Caco-2 (cell line): ENCODE measurements at regions of chr11 and their contacts with region 1.

Region 1: DNA sequence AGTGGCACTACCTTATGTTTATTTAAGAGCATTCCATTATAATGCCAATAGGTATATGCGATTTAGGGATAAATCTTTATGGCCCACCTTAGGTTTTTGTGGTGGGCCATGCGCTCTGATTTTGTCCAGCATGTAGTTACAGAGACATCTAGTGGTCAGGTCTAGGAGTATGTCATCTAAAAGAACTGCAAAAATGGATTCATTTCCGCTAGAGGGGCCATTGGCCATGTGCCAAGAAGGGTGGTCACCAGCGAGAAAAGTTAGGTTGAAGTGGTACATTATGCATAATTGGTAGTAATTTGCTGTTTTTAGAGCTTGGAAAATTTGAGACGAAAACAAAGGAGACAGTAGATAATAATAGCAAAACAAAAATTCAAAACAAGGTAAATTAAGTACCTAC is 27.7 kb downstream of the LRRC4C start:
- DNase-seq: peak in 1 of 2 experiments; percentile 19
- H3K4me3 ChIP-seq: no peak overlapping the region
- H3K4me3 Mint-ChIP-seq: no peak overlapping the region
- H3K27ac Mint-ChIP-seq: no peak overlapping the region
- H3K4me1 ChIP-seq: peaks cover 1% of the 10 kb centered on the region; the same call in 1 of the 2 replicates
- H3K4me1 Mint-ChIP-seq: peaks cover 3% of the 10 kb centered on the region
- H3K27me3 ChIP-seq: no peaks in the 10 kb centered on the region
- H3K27me3 Mint-ChIP-seq: peaks cover 2% of the 10 kb centered on the region
- CTCF ChIP-seq: peak; percentile 62 to 82

Region 2: DNA sequence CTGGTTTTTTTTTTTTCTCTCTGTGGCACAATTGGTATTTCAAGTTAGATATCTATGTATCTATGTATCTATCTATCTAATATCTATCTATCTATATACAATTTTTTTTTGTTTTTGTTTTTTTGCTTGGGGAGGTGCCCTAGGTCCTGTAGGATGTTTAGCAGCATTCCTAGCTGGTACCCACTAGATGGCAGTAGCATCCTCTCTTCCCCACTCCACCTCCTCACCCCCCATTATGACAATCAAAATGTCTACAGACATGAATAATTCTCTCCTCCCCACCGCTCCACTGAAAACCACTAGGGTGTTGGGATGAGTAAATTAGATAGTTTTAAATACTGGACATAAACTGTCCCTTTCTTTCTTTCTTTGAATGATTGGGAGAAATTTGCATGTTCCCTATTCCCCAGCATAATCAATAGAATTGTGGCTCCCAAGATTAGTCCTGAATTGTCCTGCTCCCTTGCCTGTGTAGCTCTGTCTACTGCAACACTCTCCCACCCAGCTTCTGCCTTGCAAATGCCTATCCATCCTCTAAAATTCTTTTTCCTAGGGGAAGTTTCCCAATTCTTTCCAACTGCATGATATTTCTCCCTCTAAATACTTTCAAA is 1124.7 kb before region 1 on chr11:
- CTCF ChIA-PET with region 1: no interaction called
- POLR2A ChIA-PET with region 1: no interaction called
- intact Hi-C with region 1: loop called (anchors 5 kb)
- DNase-seq: peak in 1 of 2 experiments; percentile 24
- H3K4me3 ChIP-seq: no peak overlapping the region
- H3K4me3 Mint-ChIP-seq: no peak overlapping the region
- H3K27ac Mint-ChIP-seq: no peak overlapping the region
- H3K4me1 ChIP-seq: no peaks in the 10 kb centered on the region
- H3K4me1 Mint-ChIP-seq: no peaks in the 10 kb centered on the region
- H3K27me3 ChIP-seq: no peaks in the 10 kb centered on the region
- H3K27me3 Mint-ChIP-seq: peaks cover 4% of the 10 kb centered on the region
- CTCF ChIP-seq: peak; percentile 55 to 75

Region 3: DNA sequence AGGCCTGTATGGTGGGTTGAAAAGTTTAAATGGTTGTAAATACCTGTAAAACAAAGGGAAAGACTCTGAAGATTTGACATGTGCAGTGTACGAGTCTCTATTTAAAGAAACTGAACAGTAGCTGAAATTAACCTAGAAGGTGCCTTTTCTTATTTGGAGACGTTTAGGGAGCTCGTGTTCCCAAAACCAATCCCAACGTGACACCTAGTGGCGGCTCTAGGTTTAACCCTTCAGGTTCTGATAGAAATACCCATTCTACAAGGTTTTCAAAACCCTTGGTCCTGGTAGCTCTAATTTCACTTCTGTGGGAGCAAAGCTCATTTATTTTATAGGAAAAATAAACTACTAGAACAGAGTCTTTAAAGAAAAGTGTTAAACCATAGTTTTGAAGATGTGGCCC is 230.6 kb before region 1 on chr11:
- CTCF ChIA-PET with region 1: no interaction called
- POLR2A ChIA-PET with region 1: no interaction called
- intact Hi-C with region 1: loop called (anchors 1 kb)
- DNase-seq: peak; percentile 47 to 65
- H3K4me3 ChIP-seq: no peak overlapping the region
- H3K4me3 Mint-ChIP-seq: no peak overlapping the region
- H3K27ac Mint-ChIP-seq: no peak overlapping the region
- H3K4me1 ChIP-seq: no peaks in the 10 kb centered on the region
- H3K4me1 Mint-ChIP-seq: no peaks in the 10 kb centered on the region
- H3K27me3 ChIP-seq: no peaks in the 10 kb centered on the region
- H3K27me3 Mint-ChIP-seq: peaks cover 3% of the 10 kb centered on the region
- CTCF ChIP-seq: peak; percentile 73 to 75

Region 4: GRCh38 chr11:41289408-41289807 is 142.4 kb before region 1 on chr11:
- CTCF ChIA-PET with region 1: no interaction called
- POLR2A ChIA-PET with region 1: no interaction called
- intact Hi-C with region 1: loop called (anchors 1 kb)
- DNase-seq: no peak
- H3K4me3 ChIP-seq: no peak overlapping the region
- H3K4me3 Mint-ChIP-seq: no peak overlapping the region
- H3K27ac Mint-ChIP-seq: no peak overlapping the region
- H3K4me1 ChIP-seq: no peaks in the 10 kb centered on the region
- H3K4me1 Mint-ChIP-seq: no peaks in the 10 kb centered on the region
- H3K27me3 ChIP-seq: no peaks in the 10 kb centered on the region
- H3K27me3 Mint-ChIP-seq: peaks cover 2% of the 10 kb centered on the region
- CTCF ChIP-seq: no peak

Region 5: GRCh38 chr11:41334007-41334933 is 97.5 kb before region 1 on chr11:
- CTCF ChIA-PET with region 1: no interaction called
- POLR2A ChIA-PET with region 1: no interaction called
- intact Hi-C with region 1: no loop called
- DNase-seq: no peak
- H3K4me3 ChIP-seq: no peak overlapping the region
- H3K4me3 Mint-ChIP-seq: no peak overlapping the region
- H3K27ac Mint-ChIP-seq: no peak overlapping the region
- H3K4me1 ChIP-seq: no peaks in the 10 kb centered on the region
- H3K4me1 Mint-ChIP-seq: no peaks in the 10 kb centered on the region
- H3K27me3 ChIP-seq: no peaks in the 10 kb centered on the region
- H3K27me3 Mint-ChIP-seq: peaks cover 5% of the 10 kb centered on the region
- CTCF ChIP-seq: no peak

Region 6: GRCh38 chr11:41398175-41398574 is 33.6 kb before region 1 on chr11:
- CTCF ChIA-PET with region 1: no interaction called
- POLR2A ChIA-PET with region 1: no interaction called
- intact Hi-C with region 1: loop called (anchors 5 kb)
- DNase-seq: peak in 1 of 2 experiments; percentile 39
- H3K4me3 ChIP-seq: no peak overlapping the region
- H3K4me3 Mint-ChIP-seq: peak overlapping the region; percentile 44
- H3K27ac Mint-ChIP-seq: peak overlapping the region; percentile 96
- H3K4me1 ChIP-seq: peaks cover 27% of the 10 kb centered on the region
- H3K4me1 Mint-ChIP-seq: peaks cover 50% of the 10 kb centered on the region
- H3K27me3 ChIP-seq: no peaks in the 10 kb centered on the region
- H3K27me3 Mint-ChIP-seq: no peaks in the 10 kb centered on the region
- CTCF ChIP-seq: no peak